Cardiac septum (tissue), 1 donor: ENCODE measurements at regions of chr2 and their contacts with region 1.

Region 1: DNA sequence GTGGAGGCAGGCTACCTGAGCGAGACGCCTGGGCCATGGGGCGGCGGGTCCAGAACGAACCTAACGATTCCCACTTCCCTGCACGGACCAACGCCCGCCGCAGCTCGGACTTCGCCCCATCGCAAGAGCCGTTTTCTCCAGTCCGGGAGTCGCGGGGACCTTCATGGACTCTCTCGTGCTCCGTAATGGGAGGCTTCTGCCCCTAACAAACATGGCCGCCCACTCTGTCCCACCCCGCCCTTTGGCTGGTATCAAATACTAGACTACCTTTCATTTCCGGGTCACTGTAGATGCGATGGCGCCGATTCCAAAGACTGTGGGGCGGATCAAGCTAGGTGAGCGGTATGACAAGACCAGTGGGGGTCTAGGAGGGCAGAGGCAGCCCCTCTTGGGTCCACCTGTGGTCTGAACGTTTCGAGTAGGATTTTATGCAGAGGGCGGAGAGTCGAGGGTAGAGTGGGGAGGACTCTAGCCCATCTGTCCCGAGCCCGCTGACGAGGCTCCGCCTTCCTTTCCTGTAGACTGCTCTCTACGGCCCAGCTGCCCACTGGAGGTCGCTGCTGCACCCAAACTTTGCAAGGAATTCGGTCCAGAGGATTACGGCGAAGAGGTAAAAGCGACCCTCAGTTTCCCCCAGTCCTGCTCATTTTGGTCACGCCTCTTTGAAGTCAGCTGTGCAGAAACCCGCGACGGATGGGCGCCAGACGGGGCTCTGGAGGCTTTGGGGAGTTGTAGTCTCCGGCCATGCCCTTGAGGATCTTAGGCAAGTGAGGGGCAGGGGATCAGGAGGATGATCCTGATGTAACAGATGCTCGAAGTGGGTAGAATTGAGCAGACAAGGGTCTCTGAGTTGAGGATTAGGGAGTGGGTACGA is at the starts of genes CCDC142 and TTC31:
- DNase-seq: peak; percentile 97
- total RNA-seq, gene CCDC142: 8.0 TPM
- total RNA-seq, gene TTC31: 11.2 TPM

Region 2: GRCh38 chr2:74458132-74458925 is 24.7 kb before region 1 on chr2 and contains the start of gene WBP1:
- intact Hi-C with region 1: loop called (anchors 1 kb)
- DNase-seq: peak; percentile 100
- total RNA-seq, gene WBP1: 47.7 TPM

Region 3: GRCh38 chr2:74515981-74516633 is 33.1 kb after region 1 on chr2:
- intact Hi-C with region 1: no loop called
- DNase-seq: peak; percentile 87

Region 4: GRCh38 chr2:74587664-74588277 is 104.7 kb after region 1 on chr2:
- intact Hi-C with region 1: loop called (anchors 1 kb)
- DNase-seq: peak; percentile 78

Region 5: DNA sequence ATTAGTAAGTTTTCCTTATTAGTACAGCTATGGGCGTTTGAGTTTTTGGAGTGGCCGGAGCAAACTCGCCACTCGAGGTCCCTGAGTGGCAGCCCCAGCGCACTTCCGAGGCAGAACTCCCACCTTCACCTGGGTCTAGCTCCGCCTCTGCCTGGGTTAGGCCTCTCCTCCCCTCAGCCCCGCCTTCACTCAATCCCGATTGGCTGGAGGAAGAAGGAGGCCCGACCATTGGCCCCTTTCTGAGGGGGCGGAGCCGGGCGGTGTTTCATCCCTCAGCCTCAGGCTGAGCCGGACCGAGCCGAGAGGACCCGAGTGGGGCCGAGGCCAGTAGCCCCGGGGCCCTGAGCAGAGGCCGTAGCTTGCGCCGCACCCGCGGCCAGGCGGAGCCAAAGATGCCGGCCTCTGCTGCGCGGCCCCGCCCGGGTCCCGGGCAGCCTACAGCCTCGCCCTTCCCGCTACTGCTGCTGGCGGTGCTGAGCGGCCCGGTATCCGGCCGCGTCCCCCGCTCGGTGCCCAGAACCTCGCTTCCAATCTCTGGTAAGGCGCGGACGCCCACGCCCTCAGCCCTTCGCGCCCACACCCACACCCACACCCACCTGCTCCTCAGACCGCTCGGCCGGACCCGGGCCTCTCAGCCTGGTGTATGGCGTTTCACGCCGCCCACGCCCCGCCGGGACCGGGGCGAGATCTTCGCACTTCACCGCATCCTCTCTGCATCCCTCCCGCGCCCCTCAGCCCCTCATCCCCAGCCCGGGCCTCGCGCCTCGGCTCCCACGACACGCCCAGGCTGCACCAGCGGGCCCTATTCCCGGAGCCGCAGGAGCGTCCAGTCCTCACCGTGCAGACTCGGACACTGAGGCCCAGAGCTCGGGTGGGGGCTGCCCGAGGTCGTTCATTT is 171.2 kb after region 1 on chr2 and contains the start of gene SEMA4F:
- intact Hi-C with region 1: no loop called
- DNase-seq: peak; percentile 97
- total RNA-seq, gene SEMA4F: 3.0 TPM